PC-3 (cell line): ENCODE measurements at regions of chr21 and their contacts with region 1.

Region 1: GRCh38 chr21:30733026-30733425 is 14.0 kb downstream of the KRTAP21-2 start:
- DNase-seq: peak; percentile 59
- ATAC-seq: peak; percentile 82
- H3K4me3 ChIP-seq: no peak overlapping the region
- H3K27ac ChIP-seq: no peak overlapping the region
- H3K4me1 ChIP-seq: no peaks in the 10 kb centered on the region
- H3K27me3 ChIP-seq: 0 out of 2 replicates have a peak, but pooled peaks cover 3% of the 10 kb centered on the region
- CTCF ChIP-seq: peak; percentile 74

Region 2: DNA sequence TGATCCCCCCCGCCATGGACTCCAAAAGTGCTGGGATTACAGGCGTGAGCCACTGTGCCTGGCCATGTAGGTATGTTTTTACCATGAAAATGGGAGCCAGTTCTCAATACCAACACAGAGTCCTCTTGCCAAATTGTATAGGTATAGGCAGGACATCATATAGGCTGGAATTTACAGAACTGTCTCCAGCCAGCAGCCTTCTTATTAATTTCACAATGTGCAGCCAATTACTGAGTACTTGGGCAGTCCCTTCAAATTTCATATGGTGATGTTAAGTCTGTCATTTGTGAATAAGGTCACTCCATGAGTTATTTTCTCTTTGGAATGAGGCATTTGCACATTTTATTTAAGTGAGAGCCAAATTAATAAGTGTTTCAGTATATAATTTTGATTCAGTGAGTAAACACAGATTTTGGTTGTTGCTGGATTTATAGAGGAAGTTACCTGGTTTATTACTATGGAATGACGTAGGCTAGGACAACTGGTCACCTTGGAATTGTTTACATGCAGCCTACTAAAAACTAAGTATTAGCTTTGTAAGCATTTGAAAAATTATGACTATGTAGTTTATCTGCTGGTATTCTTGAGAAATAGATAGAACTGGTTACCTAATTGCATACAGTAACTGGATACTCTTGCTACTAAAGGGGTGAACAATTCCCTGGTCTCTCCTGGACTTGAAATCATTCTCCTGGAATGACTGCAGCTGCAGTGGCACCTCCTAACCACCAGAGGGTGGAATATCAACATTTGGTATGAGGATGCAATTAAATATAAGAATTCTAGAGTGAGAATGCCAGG is 392.4 kb before region 1 on chr21:
- CTCF ChIA-PET with region 1: no interaction called
- POLR2A ChIA-PET with region 1: no interaction called
- intact Hi-C with region 1: loop called (anchors 1 kb)
- DNase-seq: peak; percentile 83
- ATAC-seq: peak; percentile 82
- H3K4me3 ChIP-seq: no peak overlapping the region
- H3K27ac ChIP-seq: peak overlapping the region; percentile 78
- H3K4me1 ChIP-seq: peaks cover 19% of the 10 kb centered on the region
- H3K27me3 ChIP-seq: peaks cover 10% of the 10 kb centered on the region; the same call in 1 of the 2 replicates
- CTCF ChIP-seq: peak; percentile 96

Region 3: GRCh38 chr21:30502041-30502440 is 231.0 kb before region 1 on chr21 and contains the start of gene KRTAP19-5:
- CTCF ChIA-PET with region 1: no interaction called
- POLR2A ChIA-PET with region 1: no interaction called
- intact Hi-C with region 1: loop called (anchors 1 kb)
- DNase-seq: no peak
- ATAC-seq: no peak
- H3K4me3 ChIP-seq: no peak within 1 kb of the TSS
- H3K27ac ChIP-seq: no peak within 1 kb of the TSS
- H3K4me1 ChIP-seq: no peaks in the 10 kb centered on the region
- H3K27me3 ChIP-seq: no peaks in the 10 kb centered on the region; the same call in 1 of the 2 replicates
- CTCF ChIP-seq: no peak
- total RNA-seq, gene KRTAP19-5: not detected in 2 replicates

Region 4: DNA sequence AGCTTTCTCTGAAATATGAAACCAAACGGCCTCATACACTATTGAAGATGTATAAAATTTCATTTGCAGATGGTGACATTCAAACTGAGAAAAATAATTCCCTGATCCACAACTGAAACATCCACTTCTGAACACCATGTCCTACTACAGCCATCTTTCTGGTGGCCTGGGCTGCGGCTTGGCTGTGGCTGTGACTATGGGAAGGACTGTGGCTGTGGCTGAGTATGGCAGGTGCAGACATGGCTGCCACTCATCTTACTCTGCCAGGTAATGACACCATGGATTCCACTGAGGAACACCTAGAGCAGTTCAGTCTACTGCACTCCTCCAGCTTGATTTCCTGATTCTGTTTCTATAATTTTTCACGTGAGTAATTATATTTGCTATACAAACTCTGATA is 112.5 kb before region 1 on chr21 and contains the start of gene KRTAP20-4:
- CTCF ChIA-PET with region 1: no interaction called
- POLR2A ChIA-PET with region 1: no interaction called
- intact Hi-C with region 1: loop called (anchors 2 kb)
- DNase-seq: no peak
- ATAC-seq: peak; percentile 16
- H3K4me3 ChIP-seq: peak within 1 kb of the TSS; percentile 30; the same call in 1 of the 2 replicates
- H3K27ac ChIP-seq: peak within 1 kb of the TSS; percentile 88
- H3K4me1 ChIP-seq: peaks cover 44% of the 10 kb centered on the region
- H3K27me3 ChIP-seq: no peaks in the 10 kb centered on the region
- CTCF ChIP-seq: no peak
- total RNA-seq, gene KRTAP20-4: not detected in 2 replicates

Region 5: GRCh38 chr21:30684506-30684905 is 48.5 kb before region 1 on chr21:
- CTCF ChIA-PET with region 1: no interaction called
- POLR2A ChIA-PET with region 1: no interaction called
- intact Hi-C with region 1: no loop called
- DNase-seq: peak; percentile 22
- ATAC-seq: 0 out of 2 replicates have a peak, but pooled peaks have one; percentile 31
- H3K4me3 ChIP-seq: no peak overlapping the region
- H3K27ac ChIP-seq: no peak overlapping the region
- H3K4me1 ChIP-seq: no peaks in the 10 kb centered on the region
- H3K27me3 ChIP-seq: no peaks in the 10 kb centered on the region
- CTCF ChIP-seq: no peak